CD4-positive, alpha-beta memory T cell (primary cell): ENCODE measurements at regions of chr6 and their contacts with region 1.

Region 1: GRCh38 chr6:108558372-108559096 is 2.2 kb upstream of the FOXO3 start:
- DNase-seq: peak; percentile 96 to 98 (median 98)
- H3K4me3 ChIP-seq: peak overlapping the region; percentile 98 to 99
- H3K4me3 Mint-ChIP-seq: peak overlapping the region; percentile 92 to 98 (median 98)
- H3K27ac ChIP-seq: peak overlapping the region; percentile 97
- H3K27ac Mint-ChIP-seq: peak overlapping the region; percentile 96 to 100 (median 99)
- H3K4me1 ChIP-seq: peaks cover 25% of the 10 kb centered on the region
- H3K4me1 Mint-ChIP-seq: peaks cover 14 to 28% (median 23%) of the 10 kb centered on the region in 4 donors
- H3K27me3 ChIP-seq: no peaks in the 10 kb centered on the region
- H3K27me3 Mint-ChIP-seq: no peaks in the 10 kb centered on the region

Region 2: GRCh38 chr6:108294727-108295625 is 263.6 kb before region 1 on chr6 and contains the start of gene AFG1L:
- CTCF ChIA-PET with region 1: no interaction called
- POLR2A ChIA-PET with region 1: interaction called, 3 read pairs
- intact Hi-C with region 1: loop called (anchors 1 kb)
- DNase-seq: peak; percentile 85 to 92 (median 88)
- H3K4me3 ChIP-seq: peak within 1 kb of the TSS; percentile 68 to 98
- H3K4me3 Mint-ChIP-seq: peak within 1 kb of the TSS; percentile 96 to 99 (median 98)
- H3K27ac ChIP-seq: peak within 1 kb of the TSS; percentile 91
- H3K27ac Mint-ChIP-seq: peak within 1 kb of the TSS; percentile 91 to 100 (median 99)
- H3K4me1 ChIP-seq: peaks cover 17% of the 10 kb centered on the region
- H3K4me1 Mint-ChIP-seq: peaks cover 6 to 23% (median 15%) of the 10 kb centered on the region in 4 donors
- H3K27me3 ChIP-seq: no peaks in the 10 kb centered on the region
- H3K27me3 Mint-ChIP-seq: no peaks in the 10 kb centered on the region
- total RNA-seq, gene AFG1L: 6.3 to 6.6 TPM

Region 3: GRCh38 chr6:108592371-108593337 is 34.1 kb after region 1 on chr6:
- CTCF ChIA-PET with region 1: no interaction called
- POLR2A ChIA-PET with region 1: interaction called, 15 read pairs
- intact Hi-C with region 1: no loop called
- DNase-seq: peak; percentile 60 to 69 (median 67)
- H3K4me3 ChIP-seq: no peak overlapping the region
- H3K4me3 Mint-ChIP-seq: peak overlapping the region in 7 of 8 donors; percentile 18 to 73 (median 42)
- H3K27ac ChIP-seq: no peak overlapping the region
- H3K27ac Mint-ChIP-seq: peak overlapping the region; percentile 22 to 77 (median 61)
- H3K4me1 ChIP-seq: peaks cover 43% of the 10 kb centered on the region
- H3K4me1 Mint-ChIP-seq: peaks cover 42 to 77% (median 56%) of the 10 kb centered on the region in 4 donors
- H3K27me3 ChIP-seq: no peaks in the 10 kb centered on the region
- H3K27me3 Mint-ChIP-seq: no peaks in the 10 kb centered on the region

Region 4: DNA sequence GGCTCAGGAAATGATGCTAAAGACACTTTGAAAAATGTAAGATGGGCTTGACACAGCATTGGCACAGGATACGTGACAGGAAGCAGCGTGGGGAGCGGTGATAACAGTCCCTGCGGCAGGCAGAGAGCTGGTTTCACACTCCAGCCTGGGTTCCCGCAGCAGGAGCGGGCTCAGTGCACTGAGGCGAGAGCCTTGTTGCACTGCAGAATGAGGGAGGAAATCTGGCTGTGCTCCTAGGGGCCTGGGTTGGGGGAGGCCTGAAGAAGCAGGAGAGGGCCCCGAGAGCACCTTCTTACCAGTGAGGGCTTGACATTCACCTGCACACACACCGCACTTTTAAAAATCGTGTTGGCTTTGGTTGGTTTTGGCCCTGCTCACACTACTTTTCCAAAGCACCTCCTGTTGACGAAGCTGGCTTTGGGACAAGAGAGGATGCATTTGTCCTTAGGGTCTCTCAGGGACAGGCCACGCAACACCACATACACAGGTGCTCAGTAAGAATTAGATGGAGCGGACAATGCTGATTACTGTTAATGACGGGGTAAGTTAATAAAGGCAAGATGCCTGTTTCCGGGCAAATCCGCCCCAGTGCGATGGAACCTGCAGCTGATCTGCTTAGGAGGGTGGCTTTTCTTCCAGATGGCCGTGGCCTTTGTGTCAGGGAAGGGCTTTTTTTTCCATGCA is 240.3 kb after region 1 on chr6:
- CTCF ChIA-PET with region 1: no interaction called
- POLR2A ChIA-PET with region 1: interaction called, 14 read pairs
- intact Hi-C with region 1: no loop called
- DNase-seq: peak; percentile 48 to 57 (median 53)
- H3K4me3 ChIP-seq: no peak overlapping the region
- H3K4me3 Mint-ChIP-seq: peak overlapping the region; percentile 21 to 90 (median 80)
- H3K27ac ChIP-seq: peak overlapping the region; percentile 22
- H3K27ac Mint-ChIP-seq: peak overlapping the region; percentile 34 to 96 (median 81)
- H3K4me1 ChIP-seq: peaks cover 32% of the 10 kb centered on the region
- H3K4me1 Mint-ChIP-seq: peaks cover 18 to 38% (median 28%) of the 10 kb centered on the region in 4 donors
- H3K27me3 ChIP-seq: no peaks in the 10 kb centered on the region
- H3K27me3 Mint-ChIP-seq: no peaks in the 10 kb centered on the region

Region 5: DNA sequence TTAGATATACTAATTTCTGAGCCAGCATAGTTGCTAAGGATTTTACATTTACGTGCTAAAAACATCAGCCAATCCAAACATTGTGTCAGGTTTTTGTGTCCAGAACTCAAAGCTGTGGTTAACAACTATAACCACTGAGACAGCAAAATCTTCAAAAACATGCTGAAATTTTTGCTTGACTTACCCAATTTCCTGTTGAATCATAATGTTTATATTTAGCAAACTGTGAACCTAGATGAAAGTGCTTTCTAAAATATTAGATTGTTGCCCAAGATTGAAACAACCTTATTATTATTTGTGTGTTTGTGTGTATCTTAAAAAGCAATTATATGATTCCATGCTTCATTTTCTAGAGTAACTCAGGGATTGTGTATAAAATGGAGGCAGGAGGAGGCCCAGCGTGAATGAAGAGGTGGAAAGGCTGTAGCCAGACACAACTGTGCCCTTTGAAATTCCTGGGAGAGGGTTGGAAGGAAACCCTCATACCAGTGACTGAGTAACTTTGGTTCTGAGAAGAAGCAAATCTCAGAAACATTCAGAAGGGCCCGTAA is 337.7 kb after region 1 on chr6:
- CTCF ChIA-PET with region 1: interaction called, 4 read pairs
- POLR2A ChIA-PET with region 1: interaction called, 19 read pairs
- intact Hi-C with region 1: loop called (anchors 5 kb)
- DNase-seq: peak; percentile 49 to 65 (median 53)
- H3K4me3 ChIP-seq: peak overlapping the region in 1 of 2 donors; percentile 2
- H3K4me3 Mint-ChIP-seq: peak overlapping the region; percentile 67 to 83 (median 78)
- H3K27ac ChIP-seq: peak overlapping the region; percentile 27
- H3K27ac Mint-ChIP-seq: peak overlapping the region; percentile 74 to 98 (median 94)
- H3K4me1 ChIP-seq: peaks cover 57% of the 10 kb centered on the region
- H3K4me1 Mint-ChIP-seq: peaks cover 25 to 53% (median 38%) of the 10 kb centered on the region in 4 donors
- H3K27me3 ChIP-seq: no peaks in the 10 kb centered on the region
- H3K27me3 Mint-ChIP-seq: no peaks in the 10 kb centered on the region

Region 6: GRCh38 chr6:108983151-108983550 is 424.6 kb after region 1 on chr6:
- CTCF ChIA-PET with region 1: no interaction called
- POLR2A ChIA-PET with region 1: no interaction called
- intact Hi-C with region 1: no loop called
- DNase-seq: no peak
- H3K4me3 ChIP-seq: no peak overlapping the region
- H3K4me3 Mint-ChIP-seq: no peak overlapping the region
- H3K27ac ChIP-seq: no peak overlapping the region
- H3K27ac Mint-ChIP-seq: peak overlapping the region in 2 of 7 donors; percentile 7 to 15
- H3K4me1 ChIP-seq: no peaks in the 10 kb centered on the region
- H3K4me1 Mint-ChIP-seq: peaks cover 0 to 2% (median under 1%) of the 10 kb centered on the region in 4 donors
- H3K27me3 ChIP-seq: no peaks in the 10 kb centered on the region
- H3K27me3 Mint-ChIP-seq: no peaks in the 10 kb centered on the region

Region 7: GRCh38 chr6:109073344-109074132 is 515.0 kb after region 1 on chr6:
- CTCF ChIA-PET with region 1: interaction called, 6 read pairs
- POLR2A ChIA-PET with region 1: interaction called, 44 read pairs
- intact Hi-C with region 1: loop called (anchors 5 kb)
- DNase-seq: peak; percentile 67 to 74 (median 71)
- H3K4me3 ChIP-seq: no peak overlapping the region
- H3K4me3 Mint-ChIP-seq: peak overlapping the region in 6 of 8 donors; percentile 20 to 71 (median 51)
- H3K27ac ChIP-seq: no peak overlapping the region
- H3K27ac Mint-ChIP-seq: peak overlapping the region in 4 of 7 donors; percentile 1 to 72 (median 34)
- H3K4me1 ChIP-seq: peaks cover 34% of the 10 kb centered on the region
- H3K4me1 Mint-ChIP-seq: peaks cover 24 to 39% (median 34%) of the 10 kb centered on the region in 4 donors
- H3K27me3 ChIP-seq: no peaks in the 10 kb centered on the region
- H3K27me3 Mint-ChIP-seq: no peaks in the 10 kb centered on the region

Region 8: GRCh38 chr6:109482905-109483735 is 924.6 kb after region 1 on chr6 and contains the start of gene ZBTB24:
- CTCF ChIA-PET with region 1: no interaction called
- POLR2A ChIA-PET with region 1: interaction called, 3 read pairs
- intact Hi-C with region 1: loop called (anchors 1 kb)
- DNase-seq: peak; percentile 90 to 93 (median 91)
- H3K4me3 ChIP-seq: peak within 1 kb of the TSS; percentile 76 to 77
- H3K4me3 Mint-ChIP-seq: peak within 1 kb of the TSS; percentile 84 to 97 (median 96)
- H3K27ac ChIP-seq: peak within 1 kb of the TSS; percentile 69
- H3K27ac Mint-ChIP-seq: peak within 1 kb of the TSS; percentile 89 to 97 (median 95)
- H3K4me1 ChIP-seq: peaks cover 46% of the 10 kb centered on the region
- H3K4me1 Mint-ChIP-seq: peaks cover 41 to 54% (median 47%) of the 10 kb centered on the region in 4 donors
- H3K27me3 ChIP-seq: no peaks in the 10 kb centered on the region
- H3K27me3 Mint-ChIP-seq: no peaks in the 10 kb centered on the region
- total RNA-seq, gene ZBTB24: 27.2 to 28.4 TPM